ENCODE measurements at regions of chr17 and their contacts with region 1.

Region 1: DNA sequence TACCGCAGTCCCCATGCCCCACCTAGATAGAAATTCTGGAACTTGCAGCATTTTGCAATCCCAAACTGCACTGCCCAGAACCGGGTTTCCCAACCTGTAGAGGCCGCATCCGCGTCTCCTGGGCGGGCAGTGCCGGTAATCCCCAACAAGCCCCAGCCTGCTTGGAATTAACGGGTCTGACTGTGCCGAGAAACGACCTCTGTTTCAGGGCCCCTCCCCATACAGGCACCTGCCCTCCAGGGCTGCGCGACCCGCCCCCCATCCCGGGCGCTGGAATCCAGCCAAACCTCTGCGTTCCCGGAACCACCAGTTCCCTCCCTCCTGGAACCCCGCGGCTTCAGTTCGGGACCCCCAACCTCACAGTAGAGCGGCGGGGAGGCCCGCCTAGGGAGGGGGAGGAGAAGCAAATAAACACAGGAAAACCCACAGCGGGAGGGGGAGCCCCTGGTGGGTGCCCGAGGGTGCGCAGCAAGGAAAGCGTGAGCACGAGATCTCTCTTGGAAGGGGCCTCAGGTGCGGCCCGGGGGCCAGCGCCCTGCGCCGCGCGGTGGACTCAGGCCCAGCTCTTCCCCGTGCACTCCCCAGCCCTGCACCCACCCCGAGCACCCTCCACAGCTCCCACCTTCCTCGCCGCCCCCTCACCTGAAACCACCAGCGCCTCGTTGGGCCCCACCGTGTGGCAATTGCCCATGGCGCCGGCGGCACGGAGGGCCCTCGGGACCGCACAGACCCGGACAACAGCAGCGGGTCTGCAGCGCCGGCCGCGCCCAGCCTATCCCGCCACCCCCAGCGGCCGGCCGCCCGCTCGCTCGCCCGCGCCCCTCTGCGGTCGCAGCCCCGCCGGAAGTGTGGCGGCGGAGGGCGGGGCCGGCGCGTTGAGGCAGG is at the start of gene FLOT2:
- DNase-seq: peak; percentile 75
- H3K4me3 ChIP-seq: peak within 1 kb of the TSS; percentile 89
- H3K27ac ChIP-seq: peak within 1 kb of the TSS; percentile 91
- H3K4me1 ChIP-seq: peaks cover 71% of the 10 kb centered on the region
- CTCF ChIP-seq: peak; percentile 27; the same call in 1 of the 2 replicates
- total RNA-seq, gene FLOT2: 43.5 and 46.5 TPM in 2 replicates

Region 2: DNA sequence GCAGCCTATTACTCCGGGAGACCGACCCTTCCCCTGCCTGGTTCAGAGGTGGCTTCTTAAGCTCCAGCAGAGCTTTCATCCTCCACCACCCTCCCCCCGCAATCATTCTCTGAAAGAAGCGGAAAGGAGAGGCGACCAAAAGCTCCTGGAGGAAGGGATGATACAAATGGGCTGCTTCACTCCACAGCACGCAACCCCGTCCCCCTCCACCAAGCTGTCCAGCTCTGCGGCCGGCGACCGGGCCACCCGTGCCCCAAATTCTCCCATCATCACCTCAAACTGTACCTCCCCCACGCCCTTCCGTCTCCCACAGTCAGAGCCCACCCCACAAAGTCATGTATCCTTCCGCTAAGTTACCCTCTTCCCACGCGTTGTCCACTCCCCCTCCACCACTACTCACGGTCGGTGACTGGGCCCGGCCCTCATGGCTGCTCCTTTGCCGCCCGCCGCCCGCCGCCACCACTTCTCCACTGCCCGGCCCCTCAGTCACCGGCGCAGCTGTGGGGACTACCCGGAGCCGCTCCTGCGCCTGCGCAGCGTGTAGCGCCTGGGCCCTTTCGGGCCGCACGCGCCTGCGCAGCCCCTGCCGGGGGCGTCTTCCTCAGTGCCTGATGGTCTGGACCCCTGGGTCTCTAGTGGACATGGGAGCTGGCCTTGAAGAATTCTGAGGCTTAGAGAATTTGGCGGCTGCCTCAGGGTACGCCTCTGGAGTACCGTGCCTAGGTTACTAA is 54.7 kb before region 1 on chr17 and contains the start of gene FAM222B:
- CTCF ChIA-PET with region 1: interaction called, 3 read pairs
- POLR2A ChIA-PET with region 1: interaction called, 8 read pairs
- intact Hi-C with region 1: loop called (anchors 2 kb)
- DNase-seq: peak; percentile 93
- H3K4me3 ChIP-seq: peak within 1 kb of the TSS; percentile 83
- H3K27ac ChIP-seq: peak within 1 kb of the TSS; percentile 37
- H3K4me1 ChIP-seq: peaks cover 13% of the 10 kb centered on the region
- CTCF ChIP-seq: no peak
- total RNA-seq, gene FAM222B: 4.0 and 4.6 TPM in 2 replicates

Measured in OCI-LY7 (cell line).